Activated B cell treated with CpG ODN at 0.5 μM for 24 hours (primary cell): ENCODE measurements at regions of chr17 and their contacts with region 1.

Region 1: DNA sequence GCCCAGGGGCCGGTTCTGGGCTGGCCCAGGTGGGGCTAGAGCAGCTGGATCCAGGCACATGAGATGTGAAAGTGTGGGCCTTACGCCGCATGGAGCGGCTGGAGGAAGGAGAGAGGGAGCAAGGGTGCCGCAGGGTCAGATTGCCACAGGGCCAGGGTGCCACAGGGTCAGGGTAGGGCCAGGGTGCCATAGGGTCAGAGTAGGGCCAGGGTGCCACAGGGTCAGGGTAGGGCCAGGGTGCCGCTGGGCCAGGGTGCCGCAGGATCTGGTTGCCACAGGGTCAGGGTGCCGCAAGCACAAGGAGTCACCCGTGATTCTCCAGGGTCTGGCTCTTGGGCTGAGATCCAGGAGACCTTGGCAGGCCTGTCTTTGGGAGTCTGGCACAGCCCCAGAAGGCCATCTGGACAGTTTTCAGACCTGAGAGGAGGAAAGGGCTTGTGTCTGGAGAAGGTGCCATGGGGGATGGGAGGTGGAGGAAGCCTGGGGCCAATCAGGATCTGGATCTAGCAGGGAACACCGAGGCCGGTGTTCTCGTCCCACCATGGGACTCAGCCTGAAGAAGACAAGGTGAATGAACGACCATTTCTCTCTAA is 13.1 kb upstream of the LASP1NB start:
- DNase-seq: no peak
- ATAC-seq: no peak
- H3K4me3 Mint-ChIP-seq: no peak overlapping the region
- H3K27ac Mint-ChIP-seq: no peak overlapping the region
- H3K4me1 Mint-ChIP-seq: peaks cover 14% of the 10 kb centered on the region
- H3K27me3 Mint-ChIP-seq: no peaks in the 10 kb centered on the region
- CTCF ChIP-seq: no peak

Region 2: GRCh38 chr17:38922538-38923297 is 10.4 kb after region 1 on chr17:
- CTCF ChIA-PET with region 1: no interaction called
- POLR2A ChIA-PET with region 1: interaction called, 8 read pairs
- intact Hi-C with region 1: loop called (anchors 2 kb)
- DNase-seq: no peak
- ATAC-seq: no peak
- H3K4me3 Mint-ChIP-seq: no peak overlapping the region
- H3K27ac Mint-ChIP-seq: peak overlapping the region; percentile 55
- H3K4me1 Mint-ChIP-seq: peaks cover 21% of the 10 kb centered on the region
- H3K27me3 Mint-ChIP-seq: no peaks in the 10 kb centered on the region
- CTCF ChIP-seq: no peak

Region 3: DNA sequence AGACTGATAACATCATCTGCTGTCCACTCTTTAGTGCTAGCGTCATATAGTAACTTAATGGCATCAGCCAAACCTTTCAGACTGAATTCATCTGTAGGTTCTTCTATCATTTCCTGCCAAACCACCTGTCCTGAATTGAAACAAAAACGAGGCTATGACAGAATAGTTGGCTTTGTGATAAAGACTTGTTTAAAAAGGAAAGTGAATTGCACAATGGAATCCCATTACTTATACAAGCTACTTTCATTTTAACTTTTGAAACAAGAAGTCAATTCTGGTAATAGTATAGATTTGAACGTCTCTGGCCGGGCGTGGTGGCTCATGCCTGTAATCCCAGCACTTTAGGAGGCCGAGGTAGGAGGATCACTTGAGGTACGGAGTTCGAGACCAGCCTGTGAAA is 31.3 kb after region 1 on chr17:
- CTCF ChIA-PET with region 1: no interaction called
- POLR2A ChIA-PET with region 1: interaction called, 13 read pairs
- intact Hi-C with region 1: no loop called
- DNase-seq: no peak
- ATAC-seq: no peak
- H3K4me3 Mint-ChIP-seq: no peak overlapping the region
- H3K27ac Mint-ChIP-seq: no peak overlapping the region
- H3K4me1 Mint-ChIP-seq: peaks cover 4% of the 10 kb centered on the region
- H3K27me3 Mint-ChIP-seq: no peaks in the 10 kb centered on the region
- CTCF ChIP-seq: no peak